ENCODE measurements at regions of chr7 and their contacts with region 1.

Region 1: DNA sequence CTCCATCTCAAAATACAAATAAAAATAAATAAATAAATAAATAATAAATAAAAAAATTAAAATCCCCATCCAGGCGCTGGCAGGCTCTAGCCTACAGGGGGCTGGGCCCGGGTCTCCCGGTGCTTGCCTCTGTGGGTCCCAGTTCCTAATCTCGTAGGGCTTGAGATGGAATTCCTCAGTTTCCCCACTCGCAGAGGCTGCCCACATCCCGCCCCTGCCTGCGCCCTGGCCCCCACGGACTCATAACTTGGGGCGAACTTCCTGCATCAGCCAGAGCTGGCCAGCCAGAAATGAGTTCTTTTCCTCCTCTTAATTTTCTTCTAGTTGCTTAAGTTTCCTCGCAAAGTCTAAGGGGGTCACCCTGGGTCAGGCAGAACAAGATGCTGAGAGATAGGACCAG is 22.0 kb upstream of the SRRM3 start:
- DNase-seq: no peak
- H3K4me3 Mint-ChIP-seq: no peak overlapping the region
- H3K27ac Mint-ChIP-seq: no peak overlapping the region
- H3K4me1 Mint-ChIP-seq: peaks cover 2% of the 10 kb centered on the region
- H3K27me3 Mint-ChIP-seq: no peaks in the 10 kb centered on the region

Region 2: GRCh38 chr7:76063577-76063976 is 116.1 kb before region 1 on chr7:
- CTCF ChIA-PET with region 1: no interaction called
- POLR2A ChIA-PET with region 1: no interaction called
- DNase-seq: no peak
- H3K4me3 Mint-ChIP-seq: no peak overlapping the region
- H3K27ac Mint-ChIP-seq: no peak overlapping the region
- H3K4me1 Mint-ChIP-seq: no peaks in the 10 kb centered on the region
- H3K27me3 Mint-ChIP-seq: no peaks in the 10 kb centered on the region

Region 3: DNA sequence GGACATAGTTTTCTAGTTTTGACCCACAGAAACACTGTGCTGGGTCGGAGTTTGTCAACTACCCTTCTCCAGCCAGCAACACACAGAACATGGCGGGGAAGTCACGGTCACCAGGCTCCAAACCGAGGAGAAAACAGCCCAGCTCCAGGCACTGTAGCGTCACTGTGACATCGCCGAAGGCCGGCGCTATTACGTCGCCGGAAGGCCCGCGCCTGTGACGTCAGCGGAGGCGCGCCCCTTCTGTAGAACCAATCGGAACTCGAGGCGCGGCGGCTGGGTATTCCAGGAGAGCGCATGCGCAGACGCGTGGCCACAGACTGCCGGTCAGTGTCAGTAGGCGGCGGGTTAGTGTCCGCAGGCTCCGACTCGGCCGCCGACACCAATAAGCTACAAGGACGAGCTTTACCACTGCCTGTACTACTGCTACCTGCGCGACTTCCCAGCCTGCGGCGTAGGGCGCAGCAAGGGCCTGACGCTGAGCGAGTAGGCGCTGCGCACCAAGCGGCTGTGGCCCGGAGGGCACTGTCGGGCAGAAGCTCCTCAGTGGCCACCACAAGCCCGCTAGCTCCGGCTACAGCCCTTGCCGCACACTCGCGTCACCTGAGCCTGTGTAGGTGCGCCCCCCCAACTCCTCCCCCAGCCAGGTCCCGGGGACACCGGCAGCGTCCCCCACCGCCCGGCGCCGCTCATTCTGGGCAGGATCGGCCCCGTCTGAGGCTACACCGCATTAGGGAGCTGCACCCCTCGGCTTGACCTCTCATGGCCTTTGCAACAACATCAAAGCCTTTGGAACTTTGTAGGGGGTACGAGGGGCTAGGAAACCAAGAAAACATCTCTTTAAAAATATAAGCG is 13.1 kb before region 1 on chr7:
- CTCF ChIA-PET with region 1: interaction called, 16 read pairs
- POLR2A ChIA-PET with region 1: no interaction called
- DNase-seq: peak; percentile 94
- H3K4me3 Mint-ChIP-seq: peak overlapping the region; percentile 82
- H3K27ac Mint-ChIP-seq: peak overlapping the region; percentile 96
- H3K4me1 Mint-ChIP-seq: peaks cover 11% of the 10 kb centered on the region
- H3K27me3 Mint-ChIP-seq: no peaks in the 10 kb centered on the region

Region 4: DNA sequence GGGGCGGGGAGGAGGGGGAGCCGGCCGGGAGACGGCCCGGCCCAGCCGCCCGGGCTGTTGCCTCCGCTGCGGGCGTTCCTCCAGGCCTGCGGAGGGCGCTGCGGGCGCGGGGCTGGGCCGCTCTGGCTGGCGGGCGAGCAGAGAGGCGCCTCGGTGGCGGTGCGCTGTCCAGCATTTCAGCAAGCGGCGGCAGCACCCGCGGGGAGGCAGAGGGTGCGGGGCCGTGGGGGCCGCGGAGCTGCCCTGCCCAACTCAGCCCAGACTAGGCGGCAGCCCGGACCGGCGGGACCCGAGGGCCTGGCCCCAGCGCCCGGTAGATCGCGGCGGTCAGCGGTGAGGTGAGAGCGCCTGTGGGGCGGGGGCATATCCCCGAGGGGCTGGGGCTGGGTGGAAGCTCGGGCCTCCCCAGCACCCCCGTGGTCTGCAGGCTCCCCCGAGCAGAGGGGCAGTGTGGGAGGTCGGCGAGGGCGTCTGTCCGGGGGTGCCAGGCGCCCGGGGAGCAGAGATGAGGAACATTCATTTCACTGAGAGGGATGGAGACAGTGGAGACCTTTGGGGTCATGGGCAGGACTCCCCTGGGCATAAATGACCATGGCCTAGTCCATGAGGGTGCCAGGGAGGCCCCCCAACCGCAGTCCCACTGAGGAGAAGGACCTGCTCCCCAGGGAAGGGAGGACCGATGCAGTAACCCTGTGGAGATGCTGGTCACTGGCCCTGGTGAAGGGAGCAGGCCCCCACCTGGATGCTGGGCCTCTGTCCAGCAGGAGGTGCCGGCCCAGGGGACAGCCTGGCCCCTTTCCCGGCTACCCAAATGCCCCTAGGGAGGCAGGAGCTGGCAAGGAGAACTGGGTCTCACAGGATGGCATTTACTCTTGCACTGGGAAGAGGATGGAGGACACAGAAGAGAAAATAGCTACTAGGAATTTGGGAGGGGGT is 22.3 kb after region 1 on chr7 and contains the start of gene SRRM3:
- CTCF ChIA-PET with region 1: interaction called, 10 read pairs
- POLR2A ChIA-PET with region 1: no interaction called
- DNase-seq: peak; percentile 85
- H3K4me3 Mint-ChIP-seq: no peak within 1 kb of the TSS
- H3K27ac Mint-ChIP-seq: no peak within 1 kb of the TSS
- H3K4me1 Mint-ChIP-seq: no peaks in the 10 kb centered on the region
- H3K27me3 Mint-ChIP-seq: peaks cover 4% of the 10 kb centered on the region
- total RNA-seq, gene SRRM3: not detected

Region 5: GRCh38 chr7:76262683-76263402 is 83.2 kb after region 1 on chr7:
- CTCF ChIA-PET with region 1: interaction called, 24 read pairs
- POLR2A ChIA-PET with region 1: no interaction called
- DNase-seq: peak; percentile 33
- H3K4me3 Mint-ChIP-seq: no peak overlapping the region
- H3K27ac Mint-ChIP-seq: no peak overlapping the region
- H3K4me1 Mint-ChIP-seq: peaks cover 6% of the 10 kb centered on the region
- H3K27me3 Mint-ChIP-seq: peaks cover 31% of the 10 kb centered on the region